ENCODE measurements at regions of chr18 and their contacts with region 1.

Region 1: GRCh38 chr18:24176727-24177416 is 38.0 kb downstream of the CABYR start:
- DNase-seq: peak; percentile 61
- ATAC-seq: peak; percentile 96
- H3K4me3 ChIP-seq: peak overlapping the region; percentile 19; the same call in 1 of the 2 replicates
- H3K27ac ChIP-seq: peak overlapping the region; percentile 62
- H3K4me1 ChIP-seq: peaks cover 15% of the 10 kb centered on the region
- H3K27me3 ChIP-seq: no peaks in the 10 kb centered on the region
- CTCF ChIP-seq: peak; percentile 61 to 83 (median 83)
- EP300 ChIP-seq: no peak
- POLR2A ChIP-seq: 0 out of 2 replicates have a peak, but pooled peaks have one; percentile 34
- RAD21 ChIP-seq: peak; percentile 78

Region 2: GRCh38 chr18:23106580-23106979 is 1070.3 kb before region 1 on chr18:
- CTCF ChIA-PET with region 1: no interaction called
- POLR2A ChIA-PET with region 1: no interaction called
- RAD21 ChIA-PET with region 1: no interaction called
- SMC1A ChIA-PET with region 1: no interaction called
- in situ Hi-C with region 1: no loop called
- intact Hi-C with region 1: no loop called
- DNase-seq: no peak
- ATAC-seq: peak; percentile 38
- H3K4me3 ChIP-seq: no peak overlapping the region
- H3K27ac ChIP-seq: no peak overlapping the region
- H3K4me1 ChIP-seq: no peaks in the 10 kb centered on the region
- H3K27me3 ChIP-seq: no peaks in the 10 kb centered on the region; a peak in 1 of 4 replicates
- CTCF ChIP-seq: no peak
- EP300 ChIP-seq: no peak
- POLR2A ChIP-seq: no peak
- RAD21 ChIP-seq: no peak

Region 3: DNA sequence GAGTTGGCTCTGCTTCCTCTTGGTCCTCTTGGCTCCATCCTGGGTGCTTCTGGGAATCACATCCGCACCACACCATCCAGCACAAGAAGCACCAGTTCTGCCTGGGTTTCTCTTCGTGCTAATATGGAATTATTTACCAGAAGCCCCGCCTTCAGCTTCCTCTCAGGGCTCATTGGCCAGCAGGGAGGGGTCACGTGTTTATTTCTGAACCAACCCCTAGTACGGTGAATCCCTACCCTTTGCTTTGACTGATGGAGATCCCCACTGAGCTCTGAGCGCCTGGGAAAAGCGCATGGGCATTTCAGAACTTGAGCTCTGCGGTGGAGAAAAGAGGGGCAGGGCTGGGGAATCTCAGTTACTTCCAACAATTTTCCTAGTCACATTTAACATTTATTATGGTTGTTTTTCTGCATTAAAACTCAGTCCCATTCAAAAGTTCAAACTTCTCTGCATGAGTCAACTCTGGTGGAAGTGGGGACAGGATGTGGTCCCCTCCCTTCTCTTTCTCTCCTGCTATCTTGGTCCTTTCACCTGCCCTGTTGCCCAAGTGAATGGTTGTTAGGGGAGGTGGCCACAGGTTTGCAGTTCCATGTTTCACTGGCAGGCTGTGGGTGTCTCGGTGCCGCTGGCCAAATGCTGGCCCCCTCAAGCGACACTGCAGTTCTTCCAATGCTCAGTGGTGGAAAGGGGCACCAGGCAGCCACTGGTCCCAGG is 238.7 kb before region 1 on chr18:
- CTCF ChIA-PET with region 1: no interaction called
- POLR2A ChIA-PET with region 1: no interaction called
- RAD21 ChIA-PET with region 1: no interaction called
- SMC1A ChIA-PET with region 1: no interaction called
- in situ Hi-C with region 1: no loop called
- intact Hi-C with region 1: no loop called
- DNase-seq: no peak
- ATAC-seq: peak; percentile 69
- H3K4me3 ChIP-seq: no peak overlapping the region
- H3K27ac ChIP-seq: no peak overlapping the region
- H3K4me1 ChIP-seq: peaks cover 40% of the 10 kb centered on the region
- H3K27me3 ChIP-seq: no peaks in the 10 kb centered on the region
- CTCF ChIP-seq: no peak
- EP300 ChIP-seq: no peak; a peak in 1 of 4 replicates
- POLR2A ChIP-seq: no peak
- RAD21 ChIP-seq: no peak

Region 4: DNA sequence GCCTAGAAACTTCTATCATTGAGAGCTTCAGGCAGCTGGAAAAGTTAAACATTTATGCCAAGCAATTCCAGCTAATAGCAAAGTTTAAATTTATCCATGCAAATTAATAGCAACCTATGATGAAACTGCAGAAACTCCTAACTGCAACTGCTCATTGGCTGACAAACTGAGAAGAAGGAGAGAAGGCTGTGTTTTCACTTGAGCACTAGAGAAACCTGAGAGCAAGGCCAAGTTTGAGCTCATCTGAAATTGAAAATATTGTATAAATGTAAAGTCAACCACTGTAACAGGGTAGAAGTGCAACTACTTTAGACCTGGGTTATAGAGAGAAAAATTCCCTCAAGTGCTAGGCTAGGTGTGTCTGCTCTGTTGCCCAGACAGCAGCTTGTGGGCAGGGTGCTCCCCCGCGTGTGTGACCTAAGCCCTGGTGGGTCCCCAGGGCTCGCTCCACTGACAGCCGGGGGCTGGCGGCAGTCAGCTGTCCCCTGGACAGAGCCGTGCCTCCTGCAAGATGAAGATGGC is 12.2 kb after region 1 on chr18:
- CTCF ChIA-PET with region 1: interaction called, 69 read pairs
- POLR2A ChIA-PET with region 1: no interaction called
- RAD21 ChIA-PET with region 1: interaction called, 14 read pairs
- SMC1A ChIA-PET with region 1: interaction called, 48 read pairs
- in situ Hi-C with region 1: no loop called
- intact Hi-C with region 1: no loop called
- DNase-seq: peak; percentile 50
- ATAC-seq: peak; percentile 94
- H3K4me3 ChIP-seq: no peak overlapping the region
- H3K27ac ChIP-seq: no peak overlapping the region
- H3K4me1 ChIP-seq: peaks cover 21% of the 10 kb centered on the region
- H3K27me3 ChIP-seq: peaks cover 0 to 9% of the 10 kb centered on the region in 2 experiments; a peak in 2 of 4 replicates
- CTCF ChIP-seq: no peak
- EP300 ChIP-seq: no peak
- POLR2A ChIP-seq: no peak
- RAD21 ChIP-seq: peak; percentile 11; the same call in 1 of the 2 replicates

Region 5: GRCh38 chr18:24219561-24220317 is 42.9 kb after region 1 on chr18:
- CTCF ChIA-PET with region 1: interaction called, 13 read pairs
- POLR2A ChIA-PET with region 1: no interaction called
- RAD21 ChIA-PET with region 1: interaction called, 6 read pairs
- SMC1A ChIA-PET with region 1: interaction called, 5 read pairs
- in situ Hi-C with region 1: no loop called
- intact Hi-C with region 1: no loop called
- DNase-seq: no peak
- ATAC-seq: 0 out of 3 replicates have a peak, but pooled peaks have one; percentile 21
- H3K4me3 ChIP-seq: no peak overlapping the region
- H3K27ac ChIP-seq: no peak overlapping the region
- H3K4me1 ChIP-seq: no peaks in the 10 kb centered on the region
- H3K27me3 ChIP-seq: peaks cover 1 to 10% of the 10 kb centered on the region in 2 experiments; a peak in 2 of 4 replicates
- CTCF ChIP-seq: no peak
- EP300 ChIP-seq: no peak
- POLR2A ChIP-seq: no peak
- RAD21 ChIP-seq: no peak